B cell (primary cell): ENCODE measurements at regions of chr1 and their contacts with region 1.

Region 1: DNA sequence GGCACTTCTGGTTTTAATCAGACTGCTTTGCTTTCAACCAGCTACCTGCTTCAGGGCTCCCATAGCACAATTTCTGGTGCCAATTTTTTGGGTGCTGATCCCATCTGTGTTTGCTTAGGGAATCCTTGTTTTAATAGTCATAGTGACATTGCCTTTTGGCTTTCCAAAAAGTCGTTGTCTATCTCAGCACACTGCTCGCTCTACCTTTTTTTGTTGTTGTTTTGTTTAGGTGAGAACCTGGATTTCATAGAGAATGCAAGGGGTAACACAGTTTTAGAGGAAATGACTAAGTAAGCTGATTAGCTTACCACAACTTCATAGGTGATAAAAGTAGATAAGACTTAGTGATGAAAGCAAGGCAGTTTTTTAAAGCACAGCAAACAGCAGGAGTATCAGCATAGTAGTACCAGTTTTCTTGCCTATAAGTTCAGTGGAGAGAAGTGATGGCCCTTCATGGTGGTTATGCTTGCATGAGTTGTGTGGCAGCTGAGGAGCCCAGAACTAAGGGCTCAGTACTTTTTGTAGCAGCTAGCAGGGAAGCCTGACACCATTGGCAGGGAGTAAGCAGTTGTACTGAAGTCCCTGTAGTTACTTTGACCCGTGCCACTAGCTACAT is 31.3 kb downstream of the NEK7 start:
- DNase-seq: no peak
- ATAC-seq: no peak
- H3K4me3 ChIP-seq: no peak overlapping the region
- H3K4me3 Mint-ChIP-seq: peak overlapping the region; percentile 1
- H3K27ac ChIP-seq: no peak overlapping the region
- H3K27ac Mint-ChIP-seq: no peak overlapping the region
- H3K4me1 ChIP-seq: peaks cover 12 to 24% of the 10 kb centered on the region in 2 donors
- H3K4me1 Mint-ChIP-seq: peaks cover 68% of the 10 kb centered on the region
- H3K27me3 ChIP-seq: no peaks in the 10 kb centered on the region
- H3K27me3 Mint-ChIP-seq: no peaks in the 10 kb centered on the region
- CTCF ChIP-seq: no peak

Region 2: DNA sequence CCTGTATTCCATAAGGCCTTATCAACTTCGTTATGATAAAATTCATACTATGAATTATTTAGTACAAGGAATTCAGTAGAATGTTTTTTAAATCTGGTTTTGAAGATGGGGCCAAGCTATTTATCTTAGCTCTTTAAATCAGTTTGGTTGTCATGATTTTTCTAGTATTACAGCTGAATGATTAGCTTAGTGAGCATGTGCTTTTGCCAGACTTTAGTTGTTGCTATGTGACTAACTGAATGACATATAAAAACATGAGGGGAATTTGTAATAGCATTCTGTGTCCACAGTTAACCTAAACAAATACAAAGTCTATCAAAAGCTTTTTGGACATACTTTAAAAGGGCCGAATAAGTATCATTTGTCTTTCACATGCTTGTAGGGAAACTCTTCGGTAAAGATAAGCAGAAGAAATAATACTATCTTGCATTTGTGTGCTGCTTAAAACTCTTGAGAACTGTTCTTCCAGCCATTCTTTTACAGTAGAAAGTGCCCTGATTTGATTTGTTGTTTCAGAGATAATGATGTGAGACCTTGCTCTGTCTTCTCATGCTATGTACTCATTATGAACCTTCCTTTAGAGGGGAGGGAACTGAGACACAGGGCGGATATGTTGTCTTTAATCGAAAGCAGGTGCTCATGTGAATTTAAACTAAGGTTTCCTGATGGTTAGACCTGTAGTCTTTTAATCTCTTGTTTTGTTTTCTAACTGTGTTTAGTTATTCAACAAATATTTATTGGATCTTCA is 12.5 kb before region 1 on chr1:
- CTCF ChIA-PET with region 1: no interaction called
- POLR2A ChIA-PET with region 1: no interaction called
- intact Hi-C with region 1: loop called (anchors 2 kb)
- DNase-seq: peak; percentile 36
- ATAC-seq: peak; percentile 54
- H3K4me3 ChIP-seq: no peak overlapping the region
- H3K4me3 Mint-ChIP-seq: peak overlapping the region; percentile 76
- H3K27ac ChIP-seq: peak overlapping the region in 1 of 2 donors; percentile 56
- H3K27ac Mint-ChIP-seq: peak overlapping the region; percentile 81
- H3K4me1 ChIP-seq: peaks cover 30 to 52% of the 10 kb centered on the region in 2 donors
- H3K4me1 Mint-ChIP-seq: peaks cover 76% of the 10 kb centered on the region
- H3K27me3 ChIP-seq: no peaks in the 10 kb centered on the region
- H3K27me3 Mint-ChIP-seq: no peaks in the 10 kb centered on the region
- CTCF ChIP-seq: no peak

Region 3: GRCh38 chr1:198199105-198199504 is 11.0 kb after region 1 on chr1:
- CTCF ChIA-PET with region 1: no interaction called
- POLR2A ChIA-PET with region 1: no interaction called
- intact Hi-C with region 1: loop called (anchors 2 kb)
- DNase-seq: peak; percentile 18
- ATAC-seq: peak; percentile 88
- H3K4me3 ChIP-seq: no peak overlapping the region
- H3K4me3 Mint-ChIP-seq: no peak overlapping the region
- H3K27ac ChIP-seq: no peak overlapping the region
- H3K27ac Mint-ChIP-seq: no peak overlapping the region
- H3K4me1 ChIP-seq: peaks cover 15 to 27% of the 10 kb centered on the region in 2 donors
- H3K4me1 Mint-ChIP-seq: peaks cover 66% of the 10 kb centered on the region
- H3K27me3 ChIP-seq: no peaks in the 10 kb centered on the region
- H3K27me3 Mint-ChIP-seq: no peaks in the 10 kb centered on the region
- CTCF ChIP-seq: no peak

Region 4: GRCh38 chr1:198234520-198235251 is 46.6 kb after region 1 on chr1:
- CTCF ChIA-PET with region 1: no interaction called
- POLR2A ChIA-PET with region 1: no interaction called
- intact Hi-C with region 1: loop called (anchors 5 kb)
- DNase-seq: no peak
- ATAC-seq: no peak
- H3K4me3 ChIP-seq: no peak overlapping the region
- H3K4me3 Mint-ChIP-seq: no peak overlapping the region
- H3K27ac ChIP-seq: peak overlapping the region in 1 of 2 donors; percentile 35
- H3K27ac Mint-ChIP-seq: no peak overlapping the region
- H3K4me1 ChIP-seq: peaks cover 13 to 17% of the 10 kb centered on the region in 2 donors
- H3K4me1 Mint-ChIP-seq: peaks cover 25% of the 10 kb centered on the region
- H3K27me3 ChIP-seq: no peaks in the 10 kb centered on the region
- H3K27me3 Mint-ChIP-seq: no peaks in the 10 kb centered on the region
- CTCF ChIP-seq: no peak